GM12878 (cell line): ENCODE measurements at regions of chr1 and their contacts with region 1.

Region 1: DNA sequence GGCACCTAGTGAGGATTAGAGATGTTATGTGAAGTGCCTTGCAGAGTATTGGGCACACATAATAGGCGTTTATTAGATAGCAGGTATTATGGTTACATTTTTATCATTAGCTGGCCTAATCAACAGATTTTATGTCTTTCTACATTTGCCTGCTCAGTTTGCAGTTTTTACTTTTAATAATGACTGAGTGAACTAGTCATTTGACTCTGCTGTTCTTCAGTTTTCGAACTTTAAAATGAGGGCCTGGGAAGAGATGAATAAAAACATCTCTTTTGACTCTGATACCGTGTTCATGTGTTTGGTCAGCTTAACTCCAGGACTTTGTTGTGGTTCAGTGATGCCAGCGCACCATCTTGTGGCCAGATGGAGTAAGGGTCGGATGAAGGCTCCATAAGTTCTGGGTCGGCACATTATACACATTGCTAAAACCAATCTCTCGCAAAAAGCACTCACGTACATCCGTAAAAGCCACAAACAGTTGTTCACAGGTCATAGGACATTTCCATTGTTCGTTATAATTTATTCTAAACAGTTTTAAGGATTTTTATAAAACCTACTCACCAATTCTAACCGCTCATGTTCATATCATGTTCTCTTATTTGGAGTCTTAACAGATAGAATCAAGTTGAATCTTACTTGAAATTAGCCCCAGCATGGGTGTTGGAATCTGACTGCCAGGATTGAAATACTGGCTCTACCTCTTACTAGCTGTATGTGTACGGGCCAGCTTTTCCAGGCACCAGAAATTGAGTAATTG is 78.4 kb upstream of the GPR88 start:
- DNase-seq: peak; percentile 55
- ATAC-seq: peak; percentile 96
- H3K4me3 ChIP-seq: no peak overlapping the region
- H3K27ac ChIP-seq: no peak overlapping the region
- H3K4me1 ChIP-seq: peaks cover 4% of the 10 kb centered on the region; the same call in 1 of the 2 replicates
- H3K27me3 ChIP-seq: no peaks in the 10 kb centered on the region
- CTCF ChIP-seq: peak; percentile 83 to 96 (median 87)
- EP300 ChIP-seq: no peak
- POLR2A ChIP-seq: no peak
- RAD21 ChIP-seq: peak; percentile 98

Region 2: DNA sequence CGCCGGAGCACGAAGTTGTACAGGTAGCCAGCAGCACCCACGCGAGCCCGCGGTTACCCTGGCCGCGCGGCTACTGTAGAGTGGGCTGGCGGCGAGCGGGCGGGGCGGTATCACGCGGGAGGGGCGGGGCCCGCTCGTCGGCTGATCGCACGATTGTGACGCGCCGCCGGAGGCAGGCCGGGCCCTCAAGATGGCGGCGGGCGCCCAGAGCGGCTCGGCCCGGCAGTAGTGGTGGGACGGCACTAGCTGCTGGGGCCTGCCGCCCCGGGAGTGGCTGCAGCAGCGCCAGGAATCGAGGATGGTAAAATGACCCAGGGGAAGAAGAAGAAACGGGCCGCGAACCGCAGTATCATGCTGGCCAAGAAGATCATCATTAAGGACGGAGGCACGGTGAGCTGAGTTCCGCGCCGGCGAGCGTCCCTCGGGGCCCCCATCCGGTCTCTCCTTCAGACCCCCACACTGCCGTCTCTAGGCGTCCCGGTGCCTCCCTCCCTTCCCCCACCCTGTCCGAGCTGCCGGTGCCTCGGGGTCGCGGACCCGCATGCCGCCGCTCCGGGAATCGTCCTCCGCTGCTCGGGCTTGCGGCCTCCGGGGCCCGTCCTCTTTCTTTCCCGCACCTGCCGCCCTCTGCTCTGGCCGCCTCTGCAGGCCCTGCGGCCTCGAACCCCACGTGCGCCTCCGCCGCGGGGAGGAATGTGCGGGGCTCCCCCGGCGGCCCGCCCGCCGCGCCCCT is 421.4 kb before region 1 on chr1:
- CTCF ChIA-PET with region 1: interaction called, 8 read pairs
- POLR2A ChIA-PET with region 1: interaction called, 5 read pairs
- RAD21 ChIA-PET with region 1: interaction called, 8 read pairs
- SMC1A ChIA-PET with region 1: interaction called, 4 read pairs
- in situ Hi-C with region 1: no loop called
- intact Hi-C with region 1: loop called (anchors 10 kb)
- DNase-seq: peak; percentile 53
- ATAC-seq: peak; percentile 86
- H3K4me3 ChIP-seq: peak overlapping the region; percentile 92
- H3K27ac ChIP-seq: peak overlapping the region; percentile 97
- H3K4me1 ChIP-seq: peaks cover 19% of the 10 kb centered on the region
- H3K27me3 ChIP-seq: no peaks in the 10 kb centered on the region
- CTCF ChIP-seq: no peak
- EP300 ChIP-seq: no peak
- POLR2A ChIP-seq: peak; percentile 99
- RAD21 ChIP-seq: no peak

Region 3: DNA sequence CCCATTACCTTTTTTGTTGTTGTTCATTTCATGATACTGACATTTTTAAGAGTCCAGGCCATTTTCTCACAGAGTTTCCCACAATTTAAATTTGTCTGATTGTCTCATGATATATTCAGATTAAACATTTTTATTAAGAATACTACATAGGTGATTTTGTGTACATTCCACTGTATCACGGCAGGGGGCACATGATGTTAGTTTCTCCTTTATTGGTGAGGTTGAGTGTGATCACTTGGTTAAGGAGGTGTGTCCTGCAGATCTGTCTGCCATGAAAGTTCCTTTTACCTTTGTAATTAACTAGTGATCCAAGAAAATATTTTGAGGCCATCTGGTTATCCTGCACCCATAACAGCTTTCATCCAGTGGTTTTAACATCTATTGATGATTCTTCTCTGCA is 181.7 kb before region 1 on chr1:
- CTCF ChIA-PET with region 1: interaction called, 17 read pairs
- POLR2A ChIA-PET with region 1: no interaction called
- RAD21 ChIA-PET with region 1: interaction called, 5 read pairs
- SMC1A ChIA-PET with region 1: interaction called, 13 read pairs
- in situ Hi-C with region 1: no loop called
- intact Hi-C with region 1: loop called (anchors 1 kb)
- DNase-seq: no peak
- ATAC-seq: peak; percentile 88
- H3K4me3 ChIP-seq: no peak overlapping the region
- H3K27ac ChIP-seq: no peak overlapping the region
- H3K4me1 ChIP-seq: no peaks in the 10 kb centered on the region
- H3K27me3 ChIP-seq: no peaks in the 10 kb centered on the region
- CTCF ChIP-seq: peak; percentile 25 to 28 (median 26); a peak in 2 of 6 replicates
- EP300 ChIP-seq: no peak
- POLR2A ChIP-seq: no peak
- RAD21 ChIP-seq: peak; percentile 46

Region 4: DNA sequence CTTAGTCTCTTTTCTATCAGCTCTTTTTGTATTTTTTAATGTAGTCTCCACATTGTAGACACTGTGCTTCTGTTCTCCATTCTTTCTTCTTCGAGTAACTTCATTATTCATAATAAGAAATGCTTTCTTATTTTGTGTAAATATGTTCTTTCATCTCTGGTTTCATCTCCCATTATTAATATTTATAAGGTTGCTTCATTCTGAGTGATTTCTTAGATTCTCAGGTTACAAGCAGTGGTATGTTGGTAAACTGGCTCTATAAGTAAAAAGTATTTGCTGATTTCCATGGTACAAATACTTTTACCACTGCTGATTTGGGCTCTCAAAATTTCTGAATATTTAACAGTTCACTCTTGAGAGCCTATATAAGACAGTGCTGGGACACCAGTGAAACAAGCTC is 26.0 kb before region 1 on chr1:
- CTCF ChIA-PET with region 1: interaction called, 19 read pairs
- POLR2A ChIA-PET with region 1: interaction called, 3 read pairs
- RAD21 ChIA-PET with region 1: interaction called, 4 read pairs
- SMC1A ChIA-PET with region 1: interaction called, 7 read pairs
- in situ Hi-C with region 1: no loop called
- intact Hi-C with region 1: no loop called
- DNase-seq: no peak
- ATAC-seq: no peak
- H3K4me3 ChIP-seq: no peak overlapping the region
- H3K27ac ChIP-seq: no peak overlapping the region
- H3K4me1 ChIP-seq: peaks cover 3% of the 10 kb centered on the region; the same call in 1 of the 2 replicates
- H3K27me3 ChIP-seq: no peaks in the 10 kb centered on the region
- CTCF ChIP-seq: no peak
- EP300 ChIP-seq: no peak
- POLR2A ChIP-seq: no peak
- RAD21 ChIP-seq: no peak

Region 5: DNA sequence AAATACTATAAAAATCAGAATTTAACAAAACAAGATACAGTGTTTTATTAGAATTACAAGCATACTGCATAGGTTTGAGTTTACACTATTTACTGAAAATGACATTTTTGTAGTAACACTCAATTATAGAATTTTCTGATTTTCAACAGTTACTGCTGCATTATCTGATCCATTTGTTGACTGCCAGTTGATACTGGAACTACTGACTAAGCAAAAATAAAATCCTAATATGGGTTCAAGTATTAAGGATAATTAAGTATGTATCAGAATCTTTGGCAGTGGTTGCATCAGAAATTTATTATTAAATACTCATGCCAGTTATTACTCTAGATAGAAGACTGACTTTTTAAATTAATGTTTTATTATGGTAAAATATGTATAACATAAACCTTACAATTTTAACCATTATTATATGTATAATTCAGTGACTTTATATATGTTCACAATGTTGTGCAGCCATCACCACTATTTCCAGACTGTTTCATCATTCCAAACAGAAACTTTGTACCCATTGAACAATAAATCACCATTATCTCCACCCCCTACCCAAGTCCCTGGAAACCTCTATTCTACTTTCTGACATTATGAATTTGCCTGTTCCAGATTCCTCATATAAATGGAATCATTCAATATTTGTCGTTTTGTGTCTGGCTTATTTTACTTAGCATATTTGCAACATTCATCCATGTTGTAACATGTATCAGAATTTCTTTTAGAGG is 20.2 kb after region 1 on chr1:
- CTCF ChIA-PET with region 1: interaction called, 10 read pairs
- POLR2A ChIA-PET with region 1: no interaction called
- RAD21 ChIA-PET with region 1: no interaction called
- SMC1A ChIA-PET with region 1: interaction called, 3 read pairs
- in situ Hi-C with region 1: no loop called
- intact Hi-C with region 1: no loop called
- DNase-seq: no peak
- ATAC-seq: no peak
- H3K4me3 ChIP-seq: no peak overlapping the region
- H3K27ac ChIP-seq: no peak overlapping the region
- H3K4me1 ChIP-seq: no peaks in the 10 kb centered on the region
- H3K27me3 ChIP-seq: no peaks in the 10 kb centered on the region
- CTCF ChIP-seq: no peak
- EP300 ChIP-seq: no peak
- POLR2A ChIP-seq: no peak
- RAD21 ChIP-seq: no peak

Region 6: DNA sequence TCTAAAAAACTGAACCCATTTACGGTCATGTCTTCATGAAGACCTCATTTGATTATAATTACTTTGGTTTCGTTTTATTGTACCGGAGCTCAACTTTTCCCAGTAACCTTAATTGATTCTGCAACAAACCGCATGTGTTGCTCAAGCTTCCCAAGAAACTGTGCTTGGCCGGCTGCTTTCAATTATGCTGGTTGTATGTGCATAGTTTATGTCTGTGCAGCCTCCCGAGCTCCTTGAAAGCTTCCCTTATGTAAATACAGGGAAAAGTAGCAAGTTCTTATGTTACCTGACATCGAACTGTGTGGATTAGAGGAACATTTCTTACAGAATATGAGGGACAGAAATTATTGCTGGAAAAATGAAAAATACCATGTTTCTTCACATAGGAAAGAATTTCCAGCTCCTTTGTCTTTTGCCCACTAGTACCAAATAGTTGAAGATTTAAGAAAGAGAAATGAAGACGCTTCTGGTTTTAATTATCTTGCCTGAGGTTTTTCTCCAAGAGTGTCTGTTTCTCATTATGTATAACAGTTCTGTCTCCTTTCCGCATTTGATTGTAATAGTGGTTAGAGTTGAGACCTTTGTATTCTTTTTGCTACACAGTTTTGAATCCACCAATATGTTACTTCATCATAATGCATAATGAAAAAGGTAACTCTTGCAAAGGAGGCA is 262.1 kb after region 1 on chr1:
- CTCF ChIA-PET with region 1: interaction called, 3 read pairs
- POLR2A ChIA-PET with region 1: no interaction called
- RAD21 ChIA-PET with region 1: no interaction called
- SMC1A ChIA-PET with region 1: no interaction called
- in situ Hi-C with region 1: no loop called
- intact Hi-C with region 1: loop called (anchors 10 kb)
- DNase-seq: no peak
- ATAC-seq: no peak
- H3K4me3 ChIP-seq: no peak overlapping the region
- H3K27ac ChIP-seq: no peak overlapping the region
- H3K4me1 ChIP-seq: no peaks in the 10 kb centered on the region
- H3K27me3 ChIP-seq: no peaks in the 10 kb centered on the region
- CTCF ChIP-seq: no peak
- EP300 ChIP-seq: no peak
- POLR2A ChIP-seq: no peak
- RAD21 ChIP-seq: no peak

Region 7: GRCh38 chr1:100794748-100795645 is 335.5 kb after region 1 on chr1:
- CTCF ChIA-PET with region 1: no interaction called
- POLR2A ChIA-PET with region 1: no interaction called
- RAD21 ChIA-PET with region 1: no interaction called
- SMC1A ChIA-PET with region 1: no interaction called
- in situ Hi-C with region 1: no loop called
- intact Hi-C with region 1: no loop called
- DNase-seq: no peak
- ATAC-seq: no peak
- H3K4me3 ChIP-seq: no peak overlapping the region
- H3K27ac ChIP-seq: no peak overlapping the region
- H3K4me1 ChIP-seq: no peaks in the 10 kb centered on the region
- H3K27me3 ChIP-seq: no peaks in the 10 kb centered on the region; a peak in 1 of 4 replicates
- CTCF ChIP-seq: no peak
- EP300 ChIP-seq: no peak
- POLR2A ChIP-seq: no peak
- RAD21 ChIP-seq: no peak

Region 8: GRCh38 chr1:100972185-100972584 is 512.6 kb after region 1 on chr1:
- CTCF ChIA-PET with region 1: no interaction called
- POLR2A ChIA-PET with region 1: no interaction called
- RAD21 ChIA-PET with region 1: no interaction called
- SMC1A ChIA-PET with region 1: no interaction called
- in situ Hi-C with region 1: no loop called
- intact Hi-C with region 1: no loop called
- DNase-seq: no peak
- ATAC-seq: no peak
- H3K4me3 ChIP-seq: no peak overlapping the region
- H3K27ac ChIP-seq: no peak overlapping the region
- H3K4me1 ChIP-seq: no peaks in the 10 kb centered on the region
- H3K27me3 ChIP-seq: no peaks in the 10 kb centered on the region
- CTCF ChIP-seq: no peak
- EP300 ChIP-seq: no peak
- POLR2A ChIP-seq: no peak
- RAD21 ChIP-seq: no peak